Activated CD4-positive, alpha-beta T cell treated with anti-CD3 and anti-CD28 coated beads for 36 hours (primary cell): ENCODE measurements at regions of chr20 and their contacts with region 1.

Region 1: DNA sequence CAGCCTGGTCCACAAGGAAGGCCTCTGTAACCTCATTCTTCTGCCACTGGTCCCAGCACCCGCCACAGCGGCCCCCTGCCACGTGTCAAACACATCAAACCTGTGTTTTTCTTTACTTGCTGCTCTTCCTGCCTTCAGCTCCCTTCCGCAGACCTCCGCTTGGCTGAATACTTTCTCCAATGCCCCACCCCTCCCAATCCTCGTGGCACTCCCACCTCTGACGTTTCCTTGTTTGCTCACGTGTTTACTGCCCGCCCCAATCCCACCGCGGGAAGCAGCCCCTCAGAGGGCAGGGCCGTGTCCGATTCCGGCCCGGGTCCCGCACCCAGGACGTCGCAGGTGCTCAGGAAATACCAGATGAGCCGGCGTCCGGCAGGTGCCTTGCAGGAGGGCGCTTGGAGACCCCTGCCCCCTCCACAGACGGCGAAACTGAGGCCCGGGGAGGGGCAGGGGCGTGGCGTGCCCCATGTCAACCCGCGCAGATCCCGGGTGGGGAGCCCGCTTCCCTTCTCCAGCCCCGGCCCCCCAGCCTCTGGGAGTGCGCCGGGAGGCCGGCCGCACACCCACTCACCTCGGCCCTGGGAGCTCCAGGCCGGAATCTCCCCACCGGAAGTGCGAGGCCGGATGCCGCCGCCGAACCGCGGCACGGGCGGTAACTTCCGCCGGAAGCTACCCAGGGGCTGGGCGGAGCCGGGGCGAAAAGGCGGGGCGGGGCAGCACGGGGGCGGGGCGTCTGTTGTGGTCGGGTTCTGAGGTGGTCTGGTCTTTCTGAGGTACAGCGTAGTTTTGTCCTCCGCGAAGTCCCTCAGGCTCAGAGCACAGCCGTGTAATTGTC is 42.4 kb downstream of the ELMO2 start:
- DNase-seq: peak; percentile 92
- ATAC-seq: peak; percentile 85
- H3K4me3 Mint-ChIP-seq: peak overlapping the region; percentile 84
- H3K27ac Mint-ChIP-seq: peak overlapping the region; percentile 86
- H3K4me1 Mint-ChIP-seq: peaks cover 82% of the 10 kb centered on the region
- H3K27me3 Mint-ChIP-seq: no peaks in the 10 kb centered on the region

Region 2: DNA sequence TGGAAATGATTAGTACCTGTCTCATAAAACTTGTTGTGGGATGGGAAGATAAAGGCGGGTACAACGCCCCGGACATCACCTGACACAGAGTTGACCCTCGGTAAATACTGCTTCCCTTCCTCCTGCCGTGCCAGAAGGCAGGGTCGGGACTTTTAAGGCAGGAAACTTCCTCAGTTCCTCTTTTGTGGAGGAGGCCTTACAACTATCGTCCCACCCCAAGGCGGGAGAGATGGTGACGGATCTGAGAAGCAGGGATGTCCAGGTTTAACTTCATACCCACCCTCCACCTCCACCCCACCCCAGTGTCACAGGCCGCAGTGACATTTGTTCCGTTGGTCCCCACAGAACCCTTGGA is 571.7 kb before region 1 on chr20:
- CTCF ChIA-PET with region 1: no interaction called
- POLR2A ChIA-PET with region 1: no interaction called
- intact Hi-C with region 1: loop called in 1 of 2 experiments (anchors 5 kb)
- DNase-seq: peak; percentile 12
- ATAC-seq: peak; percentile 2
- H3K4me3 Mint-ChIP-seq: peak overlapping the region; percentile 81
- H3K27ac Mint-ChIP-seq: peak overlapping the region; percentile 80
- H3K4me1 Mint-ChIP-seq: peaks cover 13% of the 10 kb centered on the region
- H3K27me3 Mint-ChIP-seq: no peaks in the 10 kb centered on the region

Region 3: DNA sequence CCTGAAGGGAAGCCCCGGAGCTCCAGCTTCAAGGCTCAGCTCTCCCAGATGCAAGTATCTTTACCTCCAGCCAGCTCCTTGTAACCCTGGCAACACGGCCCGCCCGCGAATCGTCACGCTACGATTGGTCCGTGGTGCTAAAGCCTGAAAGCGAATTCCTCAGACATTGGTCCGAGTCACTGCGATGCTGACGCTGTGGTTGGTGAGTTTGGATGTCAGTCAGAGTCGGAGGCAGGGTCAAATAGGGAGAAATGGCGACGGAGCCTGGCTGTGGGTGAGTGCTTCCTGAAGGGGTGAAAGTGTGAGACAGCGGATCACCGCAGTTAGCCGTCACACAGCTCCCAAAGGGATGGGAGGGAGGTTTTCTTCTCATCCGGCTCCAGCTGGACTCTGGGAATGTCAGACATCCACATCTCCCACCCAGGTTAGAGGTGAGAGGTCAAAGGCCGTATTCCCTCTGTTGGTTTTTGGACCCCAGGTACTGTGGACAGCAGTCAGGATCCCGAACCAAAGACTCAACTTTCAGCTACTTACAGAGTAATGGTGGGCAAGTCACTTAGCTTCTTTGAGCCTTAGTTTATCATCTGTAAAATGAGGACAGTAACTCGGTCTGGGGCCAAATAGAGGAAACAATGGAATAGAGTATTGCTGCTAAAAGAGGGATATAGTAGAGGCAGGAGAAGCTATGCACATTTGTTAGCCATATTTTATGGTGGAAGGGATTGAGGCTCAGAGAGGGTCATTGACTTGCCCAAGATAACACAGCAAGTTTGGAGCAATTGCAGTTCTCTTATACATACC is 482.8 kb before region 1 on chr20 and contains the start of gene ZSWIM1:
- CTCF ChIA-PET with region 1: no interaction called
- POLR2A ChIA-PET with region 1: no interaction called
- intact Hi-C with region 1: loop called in 1 of 2 experiments (anchors 10 kb)
- DNase-seq: peak; percentile 99
- ATAC-seq: peak; percentile 98
- H3K4me3 Mint-ChIP-seq: peak within 1 kb of the TSS; percentile 94
- H3K27ac Mint-ChIP-seq: peak within 1 kb of the TSS; percentile 95
- H3K4me1 Mint-ChIP-seq: peaks cover 42% of the 10 kb centered on the region
- H3K27me3 Mint-ChIP-seq: no peaks in the 10 kb centered on the region
- total RNA-seq, gene ZSWIM1: 9.4 to 10.7 TPM

Region 4: GRCh38 chr20:46013826-46014516 is 350.0 kb before region 1 on chr20:
- CTCF ChIA-PET with region 1: interaction called, 3 read pairs
- POLR2A ChIA-PET with region 1: no interaction called
- intact Hi-C with region 1: loop called in 1 of 2 experiments (anchors 5 kb)
- DNase-seq: peak; percentile 85
- ATAC-seq: peak; percentile 88
- H3K4me3 Mint-ChIP-seq: peak overlapping the region; percentile 39
- H3K27ac Mint-ChIP-seq: no peak overlapping the region
- H3K4me1 Mint-ChIP-seq: peaks cover 51% of the 10 kb centered on the region
- H3K27me3 Mint-ChIP-seq: peaks cover 58% of the 10 kb centered on the region

Region 5: DNA sequence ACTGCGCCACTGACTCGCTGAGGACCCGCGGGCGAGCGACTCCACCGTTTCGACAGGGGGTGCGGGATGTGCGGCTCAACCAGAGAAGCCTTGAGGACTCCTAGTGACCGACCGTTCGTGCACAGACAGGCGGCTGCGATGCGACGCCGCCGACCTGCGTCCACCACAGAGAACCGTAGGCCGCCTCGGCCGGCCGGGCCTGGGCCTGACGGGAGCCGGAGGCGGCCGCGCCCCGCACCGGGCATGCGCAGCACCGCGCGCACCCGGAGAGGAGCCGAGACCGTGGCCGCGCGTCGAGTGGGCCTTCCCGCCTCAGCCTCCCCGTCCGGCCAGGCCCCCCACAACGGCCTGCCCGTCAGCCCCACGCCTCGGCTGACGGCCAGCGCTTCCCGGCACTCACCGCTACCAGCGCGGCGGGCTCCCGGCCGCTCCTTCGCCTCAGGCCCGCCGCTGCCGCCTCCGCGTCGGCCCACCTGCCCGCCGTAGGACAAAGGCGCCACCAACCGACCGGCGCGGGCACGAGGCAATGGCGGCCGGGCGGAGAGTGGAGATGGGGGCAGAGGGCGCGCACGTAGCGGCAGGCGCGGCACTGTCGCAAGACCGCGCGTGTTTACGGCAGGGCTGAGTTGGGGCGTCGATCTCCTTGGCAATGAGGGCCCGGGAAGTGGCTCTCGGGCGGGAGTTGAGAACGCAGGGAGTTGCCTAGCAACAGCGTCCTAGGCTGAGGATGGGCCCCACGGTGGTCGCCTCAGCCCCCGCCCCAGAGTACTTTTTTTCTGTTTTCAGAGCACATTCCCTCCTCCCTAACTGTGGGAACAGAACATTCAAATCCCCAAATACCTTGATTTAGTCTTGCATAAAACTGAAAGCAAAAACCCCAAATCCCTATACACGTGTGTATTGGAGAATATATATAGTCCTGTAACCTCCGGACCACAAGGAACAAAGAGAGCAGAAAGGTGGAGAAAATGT is 274.3 kb before region 1 on chr20 and contains the start of gene NCOA5:
- CTCF ChIA-PET with region 1: no interaction called
- POLR2A ChIA-PET with region 1: no interaction called
- intact Hi-C with region 1: loop called in 1 of 2 experiments (anchors 1 kb)
- DNase-seq: peak; percentile 97
- ATAC-seq: peak; percentile 87
- H3K4me3 Mint-ChIP-seq: peak within 1 kb of the TSS; percentile 86
- H3K27ac Mint-ChIP-seq: peak within 1 kb of the TSS; percentile 88
- H3K4me1 Mint-ChIP-seq: peaks cover 46% of the 10 kb centered on the region
- H3K27me3 Mint-ChIP-seq: no peaks in the 10 kb centered on the region
- total RNA-seq, gene NCOA5: 17.9 to 18.8 TPM

Region 6: DNA sequence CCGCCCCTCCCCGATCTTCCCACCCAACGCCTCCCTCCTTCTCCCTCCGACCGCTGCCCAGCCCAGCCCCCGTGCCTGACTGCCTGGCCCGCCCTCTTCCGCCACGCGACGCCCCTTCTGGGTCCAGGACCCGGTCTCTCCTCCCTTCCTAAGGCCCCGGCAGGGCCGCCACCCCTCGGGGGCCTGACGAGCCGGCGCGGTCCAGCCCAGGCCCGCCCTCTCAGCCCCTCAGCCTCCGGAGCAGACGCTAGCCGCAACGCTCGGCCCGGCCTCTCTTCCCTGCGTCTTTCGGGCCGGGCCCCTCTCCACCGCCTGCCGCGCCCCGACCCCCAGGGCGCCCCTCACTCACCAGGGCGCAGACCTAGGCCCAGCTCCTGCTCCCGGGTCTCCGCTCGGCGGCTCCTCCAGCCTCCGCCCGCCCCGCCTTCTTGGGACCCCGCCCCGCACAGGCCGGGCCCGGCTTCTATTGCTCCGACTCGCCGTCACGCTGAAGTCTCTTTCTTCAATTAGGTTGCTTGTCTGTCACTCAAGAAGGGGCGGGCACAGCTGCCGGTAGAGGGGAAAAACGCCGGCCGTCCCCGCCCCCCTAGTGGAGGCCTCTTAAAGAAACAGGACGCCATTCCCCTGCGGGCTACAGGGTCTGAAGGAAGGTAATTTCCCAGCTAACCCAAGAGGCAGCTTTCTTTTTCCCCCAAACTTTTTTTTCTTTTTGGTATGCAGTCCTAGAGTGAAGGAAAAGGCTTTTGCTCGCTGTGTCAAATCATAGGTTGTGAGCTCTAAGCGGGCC is 42.4 kb after region 1 on chr20 and contains the start of gene ELMO2:
- CTCF ChIA-PET with region 1: interaction called, 11 read pairs
- POLR2A ChIA-PET with region 1: interaction called, 8 read pairs
- intact Hi-C with region 1: loop called (anchors 1 kb)
- DNase-seq: peak; percentile 98
- ATAC-seq: peak; percentile 85
- H3K4me3 Mint-ChIP-seq: peak within 1 kb of the TSS; percentile 88
- H3K27ac Mint-ChIP-seq: peak within 1 kb of the TSS; percentile 85
- H3K4me1 Mint-ChIP-seq: peaks cover 65% of the 10 kb centered on the region
- H3K27me3 Mint-ChIP-seq: no peaks in the 10 kb centered on the region
- total RNA-seq, gene ELMO2: 47.4 to 54.6 TPM

Region 7: GRCh38 chr20:46651091-46651962 is 287.3 kb after region 1 on chr20 and contains the start of gene SLC13A3:
- CTCF ChIA-PET with region 1: no interaction called
- POLR2A ChIA-PET with region 1: no interaction called
- intact Hi-C with region 1: no loop called
- DNase-seq: no peak
- ATAC-seq: no peak
- H3K4me3 Mint-ChIP-seq: no peak within 1 kb of the TSS
- H3K27ac Mint-ChIP-seq: no peak within 1 kb of the TSS
- H3K4me1 Mint-ChIP-seq: no peaks in the 10 kb centered on the region
- H3K27me3 Mint-ChIP-seq: peaks cover 33% of the 10 kb centered on the region
- total RNA-seq, gene SLC13A3: 0.07 TPM

Region 8: GRCh38 chr20:46674253-46675083 is 310.5 kb after region 1 on chr20:
- CTCF ChIA-PET with region 1: no interaction called
- POLR2A ChIA-PET with region 1: no interaction called
- intact Hi-C with region 1: no loop called
- DNase-seq: no peak
- ATAC-seq: no peak
- H3K4me3 Mint-ChIP-seq: no peak overlapping the region
- H3K27ac Mint-ChIP-seq: no peak overlapping the region
- H3K4me1 Mint-ChIP-seq: no peaks in the 10 kb centered on the region
- H3K27me3 Mint-ChIP-seq: peaks cover 1% of the 10 kb centered on the region

Region 9: DNA sequence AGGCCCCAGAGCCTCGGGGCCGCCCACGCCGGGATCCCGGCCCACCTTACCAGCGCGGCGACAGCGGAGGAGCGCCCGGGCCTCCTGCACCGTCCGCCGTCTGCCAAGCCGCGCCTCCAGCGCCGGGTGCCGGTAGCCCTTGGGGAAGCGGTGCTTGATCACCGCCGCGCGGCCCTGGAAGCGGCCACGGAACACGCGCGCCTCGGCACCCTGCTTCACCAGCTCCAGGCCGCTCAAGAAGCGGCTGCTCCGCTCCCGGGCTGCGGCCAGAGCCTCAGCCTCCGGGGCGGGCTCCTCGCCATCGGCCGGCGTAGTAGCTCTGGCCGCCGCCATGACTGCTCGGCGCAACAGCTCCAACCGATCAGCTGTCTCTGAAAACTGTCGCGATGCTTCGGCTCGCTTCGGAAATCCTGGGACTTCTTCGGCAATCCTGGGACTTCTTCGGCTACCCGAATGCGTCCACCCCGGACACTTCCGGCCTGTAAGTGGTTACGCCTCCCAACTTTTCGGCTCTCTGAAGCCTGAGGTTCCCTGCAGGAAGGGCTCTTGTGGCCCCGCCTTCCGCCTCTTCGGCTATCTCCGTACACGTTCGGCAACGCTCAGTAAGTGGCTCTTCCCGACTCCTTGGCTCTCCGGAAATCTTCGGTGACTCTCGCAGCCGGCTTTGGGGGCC is 325.2 kb after region 1 on chr20 and contains the start of gene TP53RK:
- CTCF ChIA-PET with region 1: interaction called, 4 read pairs
- POLR2A ChIA-PET with region 1: no interaction called
- intact Hi-C with region 1: loop called (anchors 1 to 5 kb)
- DNase-seq: peak; percentile 98
- ATAC-seq: peak; percentile 98
- H3K4me3 Mint-ChIP-seq: peak within 1 kb of the TSS; percentile 91
- H3K27ac Mint-ChIP-seq: peak within 1 kb of the TSS; percentile 95
- H3K4me1 Mint-ChIP-seq: peaks cover 39% of the 10 kb centered on the region
- H3K27me3 Mint-ChIP-seq: no peaks in the 10 kb centered on the region
- total RNA-seq, gene TP53RK: 11.2 to 12.1 TPM